SK-N-SH (cell line): ENCODE measurements at regions of chr2 and their contacts with region 1.

Region 1: DNA sequence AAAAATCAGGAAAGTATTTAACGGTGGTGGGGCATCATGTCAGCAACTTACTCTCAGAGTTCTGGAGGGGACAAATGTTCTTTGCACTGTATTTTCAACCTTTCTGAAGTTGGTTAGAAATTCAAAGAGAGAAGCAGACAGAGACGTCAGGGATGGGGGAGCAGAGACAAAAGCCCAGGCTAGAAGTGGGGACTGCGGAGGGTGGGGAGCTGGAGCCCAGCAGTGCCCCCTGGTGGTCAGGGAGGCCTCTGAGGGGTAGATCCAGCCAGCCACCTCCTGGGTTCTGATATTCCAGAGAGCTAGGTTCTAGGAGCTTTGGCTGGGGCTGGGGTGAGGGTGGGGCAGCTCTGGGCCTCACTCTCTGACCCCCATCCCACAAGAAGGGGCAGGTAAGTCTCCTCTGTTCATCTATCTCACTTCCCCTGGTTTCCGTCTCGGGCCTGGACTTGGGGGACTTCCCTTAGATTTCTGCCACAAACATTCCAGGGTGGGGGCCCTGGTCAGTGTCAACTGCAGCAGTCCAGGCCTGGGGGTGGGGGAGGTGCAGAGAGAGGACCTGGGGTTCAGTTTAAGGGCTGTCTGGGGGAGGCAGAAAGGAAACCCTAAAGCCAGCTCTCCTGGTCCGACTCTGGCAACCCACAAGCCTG is 8.9 kb downstream of the TNS1 start:
- DNase-seq: peak; percentile 85
- H3K4me3 ChIP-seq: peak overlapping the region in 1 of 2 experiments; percentile 38; a peak in 1 of 4 replicates
- H3K27ac ChIP-seq: peak overlapping the region in 1 of 2 experiments; percentile 94; a peak in 2 of 4 replicates
- H3K4me1 ChIP-seq: peaks cover 25 to 42% of the 10 kb centered on the region in 2 experiments; a peak in 3 of 4 replicates
- H3K27me3 ChIP-seq: no peaks in the 10 kb centered on the region
- CTCF ChIP-seq: peak; percentile 85
- EP300 ChIP-seq: no peak
- RAD21 ChIP-seq: peak; percentile 57

Region 2: GRCh38 chr2:217713395-217714286 is 280.3 kb before region 1 on chr2:
- CTCF ChIA-PET with region 1: no interaction called
- POLR2A ChIA-PET with region 1: no interaction called
- DNase-seq: peak; percentile 79
- H3K4me3 ChIP-seq: peak overlapping the region in 1 of 2 experiments; percentile 14; a peak in 1 of 4 replicates
- H3K27ac ChIP-seq: peak overlapping the region; percentile 22 to 46; a peak in 2 of 4 replicates
- H3K4me1 ChIP-seq: peaks cover 26 to 28% of the 10 kb centered on the region in 2 experiments; a peak in 3 of 4 replicates
- H3K27me3 ChIP-seq: no peaks in the 10 kb centered on the region
- CTCF ChIP-seq: peak; percentile 96
- EP300 ChIP-seq: peak in 1 of 2 experiments; percentile 32; a peak in 1 of 4 replicates
- RAD21 ChIP-seq: peak; percentile 98

Region 3: GRCh38 chr2:217775920-217776492 is 217.9 kb before region 1 on chr2:
- CTCF ChIA-PET with region 1: interaction called, 14 read pairs
- POLR2A ChIA-PET with region 1: no interaction called
- DNase-seq: no peak
- H3K4me3 ChIP-seq: no peak overlapping the region
- H3K27ac ChIP-seq: no peak overlapping the region
- H3K4me1 ChIP-seq: no peaks in the 10 kb centered on the region; a peak in 1 of 4 replicates
- H3K27me3 ChIP-seq: no peaks in the 10 kb centered on the region
- CTCF ChIP-seq: no peak
- EP300 ChIP-seq: no peak
- RAD21 ChIP-seq: no peak

Region 4: DNA sequence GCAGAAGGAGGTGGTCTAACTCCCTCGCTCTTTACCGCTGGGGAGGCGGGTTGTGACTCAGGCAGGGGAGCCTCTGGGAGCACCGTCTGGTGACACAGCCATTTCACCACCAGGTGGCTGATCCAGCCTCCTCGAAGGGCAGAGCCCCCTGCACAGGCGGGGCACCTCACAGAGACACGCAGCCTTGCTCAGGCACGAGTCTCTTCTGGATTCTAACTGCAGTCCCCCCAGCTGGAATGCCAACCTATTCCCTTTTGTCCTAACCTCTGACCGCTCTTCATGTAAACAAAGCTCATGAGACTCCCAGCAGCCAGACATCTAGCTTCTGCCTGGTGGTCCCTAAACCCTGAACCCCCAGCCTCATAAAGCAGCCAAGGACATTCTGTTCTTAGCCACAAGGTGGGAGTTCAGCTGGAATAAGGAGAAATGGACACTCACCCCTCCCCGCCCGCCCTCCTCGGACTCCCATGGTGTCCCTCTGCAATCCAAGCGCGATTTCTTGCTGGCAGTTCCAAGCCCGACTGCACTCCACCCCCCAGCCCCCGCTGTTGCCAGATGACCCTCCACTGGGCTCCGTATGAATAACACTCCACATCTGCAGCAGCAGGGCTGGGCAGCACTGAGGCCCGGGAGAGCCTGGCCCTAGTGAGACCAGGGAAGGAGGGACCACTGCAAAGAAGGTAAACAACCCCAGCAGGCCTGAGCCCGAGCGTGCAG is 75.5 kb before region 1 on chr2:
- CTCF ChIA-PET with region 1: interaction called, 17 read pairs
- POLR2A ChIA-PET with region 1: no interaction called
- DNase-seq: peak; percentile 72
- H3K4me3 ChIP-seq: no peak overlapping the region
- H3K27ac ChIP-seq: no peak overlapping the region; a peak in 1 of 4 replicates
- H3K4me1 ChIP-seq: peaks cover 46 to 63% of the 10 kb centered on the region in 2 experiments
- H3K27me3 ChIP-seq: no peaks in the 10 kb centered on the region
- CTCF ChIP-seq: peak; percentile 31
- EP300 ChIP-seq: no peak
- RAD21 ChIP-seq: no peak; the same call in 1 of the 2 replicates

Region 5: GRCh38 chr2:217943446-217944389 is 50.2 kb before region 1 on chr2:
- CTCF ChIA-PET with region 1: interaction called, 129 read pairs
- POLR2A ChIA-PET with region 1: interaction called, 3 read pairs
- DNase-seq: peak; percentile 96
- H3K4me3 ChIP-seq: peak overlapping the region; percentile 38 to 70
- H3K27ac ChIP-seq: peak overlapping the region; percentile 60 to 86; a peak in 3 of 4 replicates
- H3K4me1 ChIP-seq: peaks cover 7 to 94% of the 10 kb centered on the region in 2 experiments
- H3K27me3 ChIP-seq: no peaks in the 10 kb centered on the region
- CTCF ChIP-seq: peak; percentile 29
- EP300 ChIP-seq: no peak
- RAD21 ChIP-seq: peak; percentile 53

Region 6: DNA sequence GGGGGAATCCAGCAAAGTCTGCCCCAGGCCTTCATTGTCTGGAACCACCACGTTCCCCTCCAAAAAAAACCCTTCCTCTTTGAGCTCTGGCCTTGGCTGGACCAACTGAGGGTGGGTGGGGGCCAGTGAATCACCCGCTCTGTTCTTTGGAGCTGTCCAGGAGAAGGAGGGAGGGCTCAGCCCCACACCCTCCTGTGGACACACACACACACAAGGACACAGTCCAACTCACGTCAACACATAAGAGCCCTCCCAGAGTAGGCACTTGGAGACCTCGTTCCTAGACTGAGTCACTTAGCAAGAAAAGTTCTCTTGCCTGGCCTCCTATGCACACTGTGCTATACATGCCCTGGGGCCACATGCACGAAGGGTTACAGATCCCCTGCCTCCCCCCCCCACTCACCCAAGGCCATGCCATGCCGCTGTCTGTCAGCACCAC is 10.1 kb after region 1 on chr2:
- CTCF ChIA-PET with region 1: interaction called, 40 read pairs
- POLR2A ChIA-PET with region 1: no interaction called
- DNase-seq: peak; percentile 51
- H3K4me3 ChIP-seq: no peak overlapping the region
- H3K27ac ChIP-seq: peak overlapping the region; percentile 86 to 98
- H3K4me1 ChIP-seq: peaks cover 70 to 84% of the 10 kb centered on the region in 2 experiments
- H3K27me3 ChIP-seq: no peaks in the 10 kb centered on the region
- CTCF ChIP-seq: no peak
- EP300 ChIP-seq: no peak
- RAD21 ChIP-seq: no peak

Region 7: GRCh38 chr2:218026676-218027425 is 32.9 kb after region 1 on chr2:
- CTCF ChIA-PET with region 1: interaction called, 54 read pairs
- POLR2A ChIA-PET with region 1: no interaction called
- DNase-seq: peak; percentile 8
- H3K4me3 ChIP-seq: no peak overlapping the region
- H3K27ac ChIP-seq: no peak overlapping the region
- H3K4me1 ChIP-seq: peaks cover 0 to 18% of the 10 kb centered on the region in 2 experiments; a peak in 1 of 4 replicates
- H3K27me3 ChIP-seq: no peaks in the 10 kb centered on the region
- CTCF ChIP-seq: no peak
- EP300 ChIP-seq: no peak
- RAD21 ChIP-seq: no peak